ENCODE measurements at regions of chr9 and their contacts with region 1.

Region 1: DNA sequence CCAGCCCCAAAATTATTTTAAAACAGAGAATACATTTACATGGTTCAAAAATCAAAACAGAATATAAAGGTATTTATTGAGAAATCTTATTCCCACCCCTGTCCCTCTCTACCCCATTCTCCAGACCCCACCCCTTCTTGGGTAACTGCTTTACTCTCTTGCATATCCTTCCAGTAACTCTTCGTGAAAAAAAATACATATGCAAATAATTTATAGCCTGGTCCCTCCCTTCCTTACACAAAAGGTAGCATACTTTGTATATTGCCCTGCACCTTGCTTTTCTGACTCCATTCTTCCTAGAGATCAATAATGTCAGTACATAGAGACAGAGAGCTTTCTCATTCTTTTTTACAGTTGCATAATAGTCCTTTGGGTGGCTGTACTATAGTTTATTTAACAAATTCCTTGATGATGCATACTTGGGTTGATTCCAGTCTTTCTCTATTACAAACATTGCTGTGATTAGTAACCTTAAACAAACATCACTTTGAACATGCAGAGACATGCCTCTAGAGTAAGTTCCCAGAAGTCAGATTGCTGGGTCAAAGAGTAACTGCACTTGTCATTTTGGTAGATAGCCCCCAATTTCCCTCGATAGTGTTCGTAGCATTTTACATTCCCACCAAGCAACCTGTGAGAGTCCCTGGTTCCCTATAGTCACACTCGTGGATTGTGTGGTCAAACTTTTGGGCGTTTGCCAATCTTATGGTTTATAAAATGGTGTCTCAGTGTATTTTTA is 47.8 kb downstream of the STOM start:
- DNase-seq: no peak

Region 2: DNA sequence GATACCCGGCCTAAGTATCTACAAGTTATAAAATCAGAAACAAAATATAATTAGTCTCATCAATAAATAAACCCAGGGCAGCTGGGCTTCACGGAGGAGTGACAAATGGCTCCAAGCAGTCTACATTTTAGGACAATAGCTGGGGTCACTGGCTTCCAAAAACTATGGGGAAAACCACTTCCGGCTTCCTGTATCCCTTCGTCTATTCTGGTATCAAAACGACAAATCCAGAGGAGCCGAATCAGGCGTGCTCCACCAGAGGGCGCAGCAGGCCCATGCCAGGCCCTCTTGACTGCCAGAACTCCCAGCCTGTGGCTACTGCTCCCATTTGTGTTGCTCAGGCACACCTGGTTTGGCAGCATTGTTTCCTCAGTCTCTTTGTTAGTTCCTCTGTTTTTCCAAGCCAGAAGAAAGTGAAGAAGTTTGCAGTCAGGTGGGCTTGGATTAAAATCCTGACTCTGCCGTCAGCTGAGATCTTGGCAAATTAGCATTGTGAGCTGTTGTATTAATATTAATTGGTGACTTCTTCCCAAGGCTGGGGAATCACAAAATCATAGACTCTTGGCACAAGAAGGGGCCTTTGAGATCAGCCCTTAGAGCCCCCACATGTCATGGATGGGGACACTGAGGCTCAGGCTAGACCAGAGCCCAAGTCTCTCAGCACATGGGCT is 108.9 kb before region 1 on chr9:
- intact Hi-C with region 1: loop called (anchors 1 kb)
- DNase-seq: peak; percentile 80 to 99 (median 94)

Region 3: GRCh38 chr9:121281561-121282310 is 40.5 kb before region 1 on chr9:
- intact Hi-C with region 1: loop called (anchors 5 kb)
- DNase-seq: peak in 1 of 10 donors; percentile 86

Region 4: GRCh38 chr9:121376214-121376830 is 54.1 kb after region 1 on chr9:
- intact Hi-C with region 1: loop called (anchors 1 kb)
- DNase-seq: no peak

Region 5: GRCh38 chr9:121399883-121400607 is 77.8 kb after region 1 on chr9:
- intact Hi-C with region 1: loop called (anchors 1 kb)
- DNase-seq: no peak

Region 6: GRCh38 chr9:121735065-121735789 is 413.0 kb after region 1 on chr9:
- intact Hi-C with region 1: no loop called
- DNase-seq: peak in 2 of 10 donors; percentile 63 to 82